Heart left ventricle (tissue), 16 donors: ENCODE measurements at regions of chr14 and their contacts with region 1.

Region 1: GRCh38 chr14:30375296-30375892 is 183.6 kb upstream of the G2E3 start:
- DNase-seq: peak in 4 of 5 donors; percentile 23 to 43 (median 32)
- ATAC-seq: peak in 3 of 4 donors; percentile 53 to 77 (median 76)
- H3K4me3 ChIP-seq: no peak overlapping the region
- H3K27ac ChIP-seq: no peak overlapping the region
- H3K4me1 ChIP-seq: no peaks in the 10 kb centered on the region
- H3K27me3 ChIP-seq: peaks cover 0 to 9% (median 0%) of the 10 kb centered on the region in 9 donors
- CTCF ChIP-seq: peak; percentile 53 to 80 (median 70)
- POLR2A ChIP-seq: no peak

Region 2: GRCh38 chr14:30443368-30444007 is 68.1 kb after region 1 on chr14:
- intact Hi-C with region 1: loop called in 4 of 10 experiments (anchors 2 to 10 kb)
- DNase-seq: no peak
- ATAC-seq: no peak
- H3K4me3 ChIP-seq: no peak overlapping the region
- H3K27ac ChIP-seq: no peak overlapping the region
- H3K4me1 ChIP-seq: no peaks in the 10 kb centered on the region
- H3K27me3 ChIP-seq: peaks cover 0 to 3% (median 0%) of the 10 kb centered on the region in 9 donors
- CTCF ChIP-seq: peak; percentile 26 to 64 (median 46)
- POLR2A ChIP-seq: no peak

Region 3: GRCh38 chr14:30456296-30456695 is 80.9 kb after region 1 on chr14:
- intact Hi-C with region 1: no loop called
- DNase-seq: no peak
- ATAC-seq: no peak
- H3K4me3 ChIP-seq: no peak overlapping the region
- H3K27ac ChIP-seq: no peak overlapping the region
- H3K4me1 ChIP-seq: no peaks in the 10 kb centered on the region
- H3K27me3 ChIP-seq: no peaks in the 10 kb centered on the region
- CTCF ChIP-seq: no peak
- POLR2A ChIP-seq: no peak

Region 4: DNA sequence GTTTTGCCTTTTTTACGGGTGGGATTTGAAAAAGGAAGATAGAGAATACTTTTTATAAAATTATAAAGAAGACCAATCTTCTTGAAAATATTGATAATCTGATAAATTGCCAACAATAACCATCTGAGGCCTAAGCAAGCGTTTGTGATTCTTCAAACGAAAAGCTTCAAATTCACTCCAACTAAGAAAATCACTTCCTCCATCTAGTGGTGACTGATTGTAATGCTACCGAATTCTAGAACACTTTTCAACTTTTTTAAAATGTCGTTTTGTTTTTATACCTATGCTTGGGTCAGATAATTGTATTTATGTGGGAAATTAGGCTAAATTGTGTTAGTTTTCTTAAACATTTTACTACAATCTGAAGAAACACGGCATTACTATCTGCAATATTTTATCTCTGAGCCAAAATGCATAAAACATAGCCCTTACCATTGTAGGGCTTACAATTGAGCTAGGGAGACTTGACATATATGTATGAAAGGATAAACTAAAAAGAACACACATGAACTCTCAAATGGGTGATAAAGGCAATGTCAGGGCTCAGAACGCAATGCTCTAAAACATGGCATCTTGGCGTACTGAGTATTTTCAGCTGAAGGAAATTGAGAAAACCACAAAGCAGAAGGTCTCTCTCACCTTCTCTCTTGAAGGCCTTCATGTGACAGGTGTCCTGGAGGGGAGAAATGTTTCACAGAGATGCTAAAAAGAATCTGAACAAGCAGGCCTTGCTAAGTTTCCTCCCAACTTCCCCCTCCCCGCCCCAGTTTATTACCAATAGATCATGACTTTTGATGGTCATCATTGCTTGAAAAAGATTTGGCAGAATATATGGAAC is 146.7 kb after region 1 on chr14:
- intact Hi-C with region 1: loop called (anchors 5 to 10 kb)
- DNase-seq: no peak
- ATAC-seq: no peak
- H3K4me3 ChIP-seq: no peak overlapping the region
- H3K27ac ChIP-seq: no peak overlapping the region
- H3K4me1 ChIP-seq: peaks cover 0 to 10% (median 0%) of the 10 kb centered on the region in 12 donors
- H3K27me3 ChIP-seq: no peaks in the 10 kb centered on the region
- CTCF ChIP-seq: peak; percentile 64 to 85 (median 74)
- POLR2A ChIP-seq: no peak